GM10248 (cell line): ENCODE measurements at regions of chr6 and their contacts with region 1.

Region 1: DNA sequence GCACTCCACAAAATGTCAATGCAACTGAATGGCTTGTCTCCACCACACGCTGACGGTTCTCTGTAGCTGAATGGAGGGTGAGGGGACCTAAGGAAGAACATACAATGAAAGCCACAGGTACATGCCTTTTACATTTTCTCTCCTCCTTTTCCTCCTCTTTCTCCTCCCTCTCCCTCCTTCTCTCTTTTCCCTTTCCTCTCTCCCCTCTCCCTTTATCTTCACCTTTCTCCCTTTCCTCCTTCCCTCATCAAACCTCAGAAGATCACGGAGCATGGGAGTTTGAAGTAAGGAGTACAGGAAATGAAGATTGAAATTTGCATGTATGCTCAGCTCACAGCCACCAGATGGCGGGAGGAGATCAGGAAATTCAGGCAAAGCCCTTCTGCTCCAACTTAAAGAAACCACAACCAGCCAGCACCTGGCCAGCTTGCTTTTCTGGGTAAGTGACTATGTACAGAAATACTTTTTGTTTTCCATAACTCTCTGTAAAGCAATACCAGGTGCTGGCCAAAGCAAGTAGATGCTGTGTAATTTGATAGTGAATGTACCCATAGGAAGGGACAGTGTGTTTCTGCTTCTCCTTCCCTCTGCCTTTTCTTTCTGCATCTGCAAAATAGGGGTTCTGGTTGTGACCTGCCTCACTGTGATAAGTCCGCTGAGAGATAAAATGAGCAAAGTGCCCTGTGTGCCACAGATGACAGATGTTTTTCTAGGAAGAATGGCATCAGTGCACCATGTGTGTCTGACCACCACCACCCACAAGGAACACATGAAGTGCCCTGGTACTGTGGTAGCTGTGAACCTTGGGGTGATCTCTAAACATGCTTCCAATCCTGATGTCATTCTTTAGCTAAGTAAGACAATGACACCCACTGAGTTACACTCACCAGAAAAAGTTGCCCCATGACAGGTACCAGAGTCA is 18.6 kb upstream of the FOXO3 start:
- DNase-seq: peak; percentile 61
- CTCF ChIP-seq: peak; percentile 85

Region 2: DNA sequence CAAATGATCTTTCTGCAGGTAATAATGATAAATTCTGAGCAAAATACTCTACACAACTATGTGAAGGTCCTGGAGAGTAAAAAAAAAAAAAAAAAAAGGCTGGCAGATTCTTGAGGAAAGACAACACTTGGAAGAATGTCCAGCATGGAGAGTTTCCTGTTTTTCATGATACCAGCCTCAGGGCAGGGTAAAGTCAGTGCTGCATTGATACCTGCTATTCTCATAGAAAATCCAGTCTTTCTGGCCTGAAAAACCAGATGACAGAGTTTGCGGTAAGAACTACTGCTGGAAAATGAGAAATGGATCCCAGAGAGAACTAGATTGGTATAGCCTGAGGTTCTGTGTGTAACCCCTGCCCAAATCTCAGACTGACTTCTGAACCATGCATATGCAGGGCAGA is 158.1 kb before region 1 on chr6:
- CTCF ChIA-PET with region 1: no interaction called
- POLR2A ChIA-PET with region 1: no interaction called
- DNase-seq: no peak
- CTCF ChIP-seq: no peak

Region 3: DNA sequence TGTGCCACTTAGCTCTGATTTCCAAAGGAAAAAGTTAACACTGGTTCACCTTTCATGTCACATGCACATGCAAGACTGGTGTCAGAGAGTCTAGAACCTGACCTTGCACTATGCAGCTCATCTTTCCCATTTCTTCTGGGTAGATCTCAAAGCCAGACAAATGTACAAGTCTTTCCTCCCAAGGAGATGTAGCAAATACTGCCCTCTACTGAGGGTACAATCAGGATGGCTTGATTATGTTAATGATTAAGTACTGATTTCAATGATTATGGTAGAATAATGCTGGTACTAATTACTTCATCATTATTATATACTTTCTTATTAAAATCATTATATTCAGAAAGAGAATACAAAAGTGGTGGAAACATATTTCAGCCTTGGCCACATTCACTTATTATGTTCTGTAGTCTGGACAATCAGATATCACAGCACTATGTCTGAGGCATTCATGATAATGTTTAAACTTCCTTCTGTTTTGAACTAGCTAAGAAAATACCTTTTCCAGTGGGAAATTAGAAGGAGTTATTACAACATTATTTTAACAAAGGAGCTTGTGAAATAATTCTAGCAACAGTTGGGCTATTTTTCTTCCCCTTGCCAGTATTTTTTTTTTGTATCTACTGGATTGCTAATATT is 49.9 kb before region 1 on chr6:
- CTCF ChIA-PET with region 1: no interaction called
- POLR2A ChIA-PET with region 1: no interaction called
- DNase-seq: peak; percentile 33
- CTCF ChIP-seq: peak; percentile 64

Region 4: GRCh38 chr6:108558372-108559096 is 16.4 kb after region 1 on chr6:
- CTCF ChIA-PET with region 1: interaction called, 30 read pairs
- POLR2A ChIA-PET with region 1: no interaction called
- DNase-seq: peak; percentile 84
- CTCF ChIP-seq: no peak

Region 5: GRCh38 chr6:108609276-108609769 is 67.2 kb after region 1 on chr6:
- CTCF ChIA-PET with region 1: no interaction called
- POLR2A ChIA-PET with region 1: no interaction called
- DNase-seq: no peak
- CTCF ChIP-seq: no peak

Region 6: DNA sequence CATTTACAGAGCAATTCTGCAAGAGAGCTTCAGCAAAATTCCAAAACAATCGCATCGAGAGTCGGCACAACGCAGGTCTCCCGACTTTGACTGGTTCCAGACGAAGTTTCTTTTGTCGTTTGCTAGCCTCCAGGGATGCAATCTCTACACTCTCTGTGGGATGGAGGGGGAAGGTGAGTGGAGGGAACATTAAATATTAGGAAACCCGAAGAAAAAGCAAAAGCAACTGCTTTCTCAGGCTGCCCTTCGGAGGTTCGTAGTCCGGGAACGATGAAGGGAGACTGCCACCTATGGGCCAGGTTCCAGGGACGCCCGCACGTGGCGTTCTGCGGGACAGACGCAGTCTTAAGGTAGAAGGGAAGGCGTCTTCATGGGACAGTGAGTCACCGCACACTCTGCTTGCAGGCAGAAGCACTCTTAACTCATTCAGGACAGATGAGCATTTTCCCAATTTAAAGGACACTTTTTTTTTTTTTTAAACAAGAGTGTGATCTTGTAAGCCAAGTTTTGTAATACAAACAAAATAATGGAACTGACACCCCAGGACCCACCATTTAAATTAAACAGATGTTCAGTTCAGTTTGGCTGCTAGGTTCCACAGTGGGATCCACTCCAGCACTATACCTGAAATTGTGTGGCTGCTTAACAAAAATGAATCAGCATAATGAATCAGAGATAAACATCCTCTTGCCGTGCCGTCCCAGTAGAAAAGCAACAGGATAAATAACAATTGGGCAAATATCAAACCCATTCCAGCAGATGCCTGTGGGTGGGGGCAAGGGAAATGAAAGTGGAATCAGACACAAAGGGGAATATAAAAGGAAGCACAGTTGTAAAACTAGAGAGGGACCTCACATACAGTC is 240.3 kb after region 1 on chr6:
- CTCF ChIA-PET with region 1: interaction called, 12 read pairs
- POLR2A ChIA-PET with region 1: no interaction called
- DNase-seq: peak; percentile 72
- CTCF ChIP-seq: peak; percentile 74

Region 7: GRCh38 chr6:108848116-108848868 is 306.2 kb after region 1 on chr6 and contains the start of gene ARMC2:
- CTCF ChIA-PET with region 1: interaction called, 13 read pairs
- POLR2A ChIA-PET with region 1: no interaction called
- DNase-seq: peak; percentile 92
- CTCF ChIP-seq: no peak

Region 8: GRCh38 chr6:109073344-109074132 is 531.4 kb after region 1 on chr6:
- CTCF ChIA-PET with region 1: interaction called, 53 read pairs
- POLR2A ChIA-PET with region 1: no interaction called
- DNase-seq: peak; percentile 39
- CTCF ChIP-seq: peak; percentile 61